ENCODE measurements at regions of chr17 and their contacts with region 1.

Region 1: GRCh38 chr17:40113110-40113906 is 8.5 kb upstream of the MSL1 start:
- DNase-seq: peak; percentile 93
- ATAC-seq: peak; percentile 75

Region 2: DNA sequence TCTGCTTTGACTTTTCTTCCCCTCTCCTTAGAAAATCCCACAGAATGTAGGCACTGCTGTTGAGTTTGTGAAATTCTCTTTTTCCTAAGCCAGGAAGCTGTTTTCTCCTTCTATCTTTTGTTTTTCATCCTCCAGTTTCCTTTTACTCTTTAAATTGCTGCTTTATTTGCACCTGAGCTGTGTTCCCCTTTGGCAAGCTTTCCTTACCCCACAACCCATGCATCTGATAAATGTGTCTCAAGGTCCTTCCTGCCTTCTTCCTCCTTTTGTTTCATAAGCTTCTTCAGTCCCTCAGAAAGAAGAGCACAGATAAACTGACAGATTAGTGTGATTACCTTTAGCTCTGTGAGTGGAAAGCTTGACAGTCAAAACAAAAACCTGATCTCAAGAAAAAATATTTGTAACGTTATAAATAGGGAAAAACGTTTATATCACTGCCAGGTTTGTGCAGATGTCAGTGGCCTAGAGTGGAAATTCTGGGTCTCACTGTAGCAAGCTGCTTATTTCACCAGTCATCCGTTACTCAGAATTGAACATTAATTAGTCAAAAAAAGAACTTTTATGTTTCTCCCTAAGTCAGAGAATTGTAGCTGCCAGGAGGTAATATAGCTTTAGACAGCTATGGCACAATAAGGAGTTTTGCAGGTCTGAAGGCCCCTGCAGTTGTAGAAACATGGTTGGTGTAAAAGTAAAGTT is 218.5 kb before region 1 on chr17:
- intact Hi-C with region 1: no loop called
- DNase-seq: no peak
- ATAC-seq: no peak

Region 3: GRCh38 chr17:40038882-40039513 is 74.3 kb before region 1 on chr17:
- intact Hi-C with region 1: loop called (anchors 2 kb)
- DNase-seq: no peak
- ATAC-seq: peak; percentile 92

Region 4: DNA sequence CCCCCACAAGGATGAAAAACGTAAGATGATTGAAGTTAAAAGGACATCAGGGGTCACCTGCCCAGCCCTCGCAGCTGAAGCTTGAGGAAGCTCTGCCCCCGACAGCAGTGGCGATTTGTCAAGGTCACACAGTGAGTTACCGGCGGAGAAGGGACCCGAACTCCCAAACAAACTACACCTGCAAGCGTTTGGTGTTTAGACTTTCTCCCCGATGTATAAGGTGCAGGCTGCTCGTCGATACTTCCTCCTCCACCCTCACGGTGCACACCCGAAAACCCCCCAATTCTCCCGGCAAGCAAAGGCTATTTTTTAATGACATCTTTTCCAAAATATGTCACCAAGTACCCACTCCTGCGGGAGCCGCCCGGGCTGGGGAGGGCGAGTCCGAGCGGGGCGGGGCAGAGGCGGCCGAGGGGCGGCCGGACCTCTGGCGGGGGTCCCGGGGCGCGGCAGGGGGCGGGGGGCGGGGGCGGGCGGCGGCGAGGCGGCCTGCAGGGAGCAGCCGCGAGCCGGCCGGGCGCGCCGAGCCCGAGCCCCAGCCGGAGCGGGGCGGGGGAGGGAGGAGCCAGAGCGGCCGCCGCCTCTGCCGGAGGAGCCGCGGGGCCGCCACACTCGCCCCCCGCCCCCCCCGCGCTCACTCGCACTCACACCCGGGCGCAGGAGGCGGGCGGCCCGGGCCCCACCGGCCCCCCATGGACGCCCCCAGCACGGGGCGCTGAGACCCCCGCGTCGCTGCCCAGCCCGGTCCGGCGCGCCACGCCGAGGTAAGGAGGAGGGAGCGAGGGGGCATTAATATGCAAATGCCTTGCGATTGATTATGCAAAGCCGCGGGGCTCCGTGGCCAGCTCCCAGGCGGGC is 50.8 kb before region 1 on chr17 and contains the start of gene THRA:
- intact Hi-C with region 1: loop called (anchors 2 kb)
- DNase-seq: peak; percentile 89
- ATAC-seq: peak; percentile 69
- total RNA-seq, gene THRA: 88.3 TPM

Region 5: DNA sequence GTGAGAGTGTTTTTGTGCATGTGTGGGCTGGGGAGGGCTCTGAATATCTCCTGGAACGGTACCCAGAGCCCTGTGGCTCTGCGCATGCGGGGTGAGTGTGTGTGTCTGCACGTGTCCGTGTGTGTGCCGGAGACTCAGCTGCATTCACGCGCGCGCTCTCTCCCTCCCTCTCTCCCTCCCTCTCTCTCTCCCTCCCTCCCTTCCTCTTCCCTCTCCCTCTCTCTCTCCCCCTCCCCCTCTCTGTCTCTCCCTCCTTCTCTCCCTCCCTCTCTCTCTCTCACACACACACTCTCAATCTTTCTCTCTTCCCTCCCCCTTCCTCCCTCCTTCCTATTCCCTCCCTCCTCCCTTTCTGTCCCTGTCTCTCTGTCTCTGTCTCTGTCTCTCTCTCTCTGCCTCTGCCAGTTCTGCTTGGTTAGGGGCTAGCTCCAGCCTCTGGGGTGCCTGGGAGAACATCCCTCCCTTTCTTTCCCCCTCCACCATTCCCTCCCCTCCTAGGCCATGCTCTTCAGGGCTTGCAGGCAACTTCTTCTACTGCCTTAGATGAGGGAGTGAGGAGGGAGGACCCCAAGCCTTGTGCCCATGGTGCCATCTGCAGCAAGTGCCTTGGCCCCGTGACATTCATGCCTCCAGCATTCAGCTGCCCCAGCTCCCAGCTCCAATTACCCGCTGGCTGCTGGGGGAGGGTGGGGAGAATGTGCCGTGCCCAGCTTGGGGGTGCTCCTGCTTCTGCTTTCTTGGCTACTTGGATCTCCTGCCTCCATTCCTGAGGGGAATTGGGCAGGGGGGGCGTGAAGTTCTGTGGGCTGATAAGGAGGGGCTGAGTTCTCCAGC is 44.2 kb before region 1 on chr17:
- intact Hi-C with region 1: loop called (anchors 2 kb)
- DNase-seq: peak; percentile 95
- ATAC-seq: peak; percentile 66

Region 6: GRCh38 chr17:40098846-40099618 is 14.3 kb before region 1 on chr17:
- intact Hi-C with region 1: loop called (anchors 1 kb)
- DNase-seq: peak; percentile 100
- ATAC-seq: peak; percentile 86

Region 7: DNA sequence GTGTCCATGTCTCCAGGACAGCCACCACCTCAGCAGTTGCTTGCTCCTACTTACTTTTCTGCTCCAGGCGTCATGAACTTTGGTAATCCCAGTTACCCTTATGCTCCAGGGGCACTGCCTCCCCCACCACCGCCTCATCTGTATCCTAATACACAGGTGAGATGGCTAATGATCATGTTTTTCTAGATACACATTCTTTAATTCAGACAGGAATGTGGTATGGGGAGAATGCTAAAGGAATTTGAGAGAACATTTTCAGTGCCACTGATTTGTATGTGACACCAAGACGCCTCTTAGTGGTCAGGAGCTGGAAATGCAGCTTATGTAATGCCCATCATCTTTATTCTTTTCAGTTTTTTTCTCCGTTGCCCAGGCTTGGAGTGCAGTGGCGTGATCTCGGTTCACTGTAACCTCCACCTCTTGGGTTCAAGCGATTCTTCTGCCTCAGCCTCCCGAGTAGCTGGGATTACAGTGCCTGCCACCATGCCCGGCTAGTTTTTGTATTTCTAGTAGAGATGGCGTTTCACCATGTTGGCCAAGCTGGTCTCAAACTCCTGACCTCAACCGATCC is 55.0 kb after region 1 on chr17:
- intact Hi-C with region 1: loop called (anchors 2 kb)
- DNase-seq: no peak
- ATAC-seq: peak; percentile 73

Measured in Right ventricle myocardium inferior (tissue), 1 donor.